Naive thymus-derived CD8-positive, alpha-beta T cell (primary cell): ENCODE measurements at regions of chr12 and their contacts with region 1.

Region 1: GRCh38 chr12:112978163-112979040 is at the start of gene OAS2:
- DNase-seq: peak; percentile 42 to 88 (median 75)
- ATAC-seq: peak; percentile 96
- H3K4me3 Mint-ChIP-seq: peak within 1 kb of the TSS; percentile 84 to 100 (median 99)
- H3K27ac Mint-ChIP-seq: peak within 1 kb of the TSS; percentile 98 to 100 (median 99)
- H3K4me1 Mint-ChIP-seq: peaks cover 31 to 64% (median 53%) of the 10 kb centered on the region in 4 donors
- H3K27me3 Mint-ChIP-seq: no peaks in the 10 kb centered on the region
- polyA plus RNA-seq, gene OAS2: 25.6 to 47.9 (median 25.8) TPM

Region 2: DNA sequence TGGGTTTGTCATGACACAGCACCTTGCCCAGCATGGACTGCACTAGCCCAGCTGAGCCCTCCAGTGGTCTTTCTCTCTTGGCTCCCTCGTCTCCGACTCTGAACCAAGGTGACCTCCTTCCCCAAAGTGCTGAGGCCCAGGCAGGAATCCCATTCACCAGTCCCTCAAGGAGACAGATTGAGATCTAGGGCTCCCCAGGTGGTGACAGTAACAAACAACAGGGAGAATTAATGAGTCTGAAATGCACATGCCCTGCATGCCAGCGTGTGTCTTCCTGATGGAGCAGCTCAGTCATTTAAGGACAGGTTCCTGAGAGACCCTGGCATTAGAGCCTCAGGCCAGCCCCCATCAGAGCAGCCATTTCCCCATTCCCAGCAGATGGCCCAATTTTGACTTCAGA is 123.0 kb before region 1 on chr12:
- POLR2A ChIA-PET with region 1: no interaction called
- DNase-seq: no peak
- ATAC-seq: no peak
- H3K4me3 Mint-ChIP-seq: no peak overlapping the region
- H3K27ac Mint-ChIP-seq: no peak overlapping the region
- H3K4me1 Mint-ChIP-seq: no peaks in the 10 kb centered on the region
- H3K27me3 Mint-ChIP-seq: peaks cover 14 to 78% (median 40%) of the 10 kb centered on the region in 5 donors

Region 3: GRCh38 chr12:112906712-112907414 is 71.5 kb before region 1 on chr12 and contains the start of gene OAS1:
- POLR2A ChIA-PET with region 1: interaction called, 26 read pairs
- DNase-seq: peak in 6 of 10 donors; percentile 11 to 38 (median 28)
- ATAC-seq: peak; percentile 83 to 91
- H3K4me3 Mint-ChIP-seq: peak within 1 kb of the TSS; percentile 82 to 99 (median 94)
- H3K27ac Mint-ChIP-seq: peak within 1 kb of the TSS; percentile 91 to 99 (median 95)
- H3K4me1 Mint-ChIP-seq: peaks cover 33 to 90% (median 71%) of the 10 kb centered on the region in 4 donors
- H3K27me3 Mint-ChIP-seq: no peaks in the 10 kb centered on the region
- polyA plus RNA-seq, gene OAS1: 5.7 to 22.9 (median 9.0) TPM

Region 4: DNA sequence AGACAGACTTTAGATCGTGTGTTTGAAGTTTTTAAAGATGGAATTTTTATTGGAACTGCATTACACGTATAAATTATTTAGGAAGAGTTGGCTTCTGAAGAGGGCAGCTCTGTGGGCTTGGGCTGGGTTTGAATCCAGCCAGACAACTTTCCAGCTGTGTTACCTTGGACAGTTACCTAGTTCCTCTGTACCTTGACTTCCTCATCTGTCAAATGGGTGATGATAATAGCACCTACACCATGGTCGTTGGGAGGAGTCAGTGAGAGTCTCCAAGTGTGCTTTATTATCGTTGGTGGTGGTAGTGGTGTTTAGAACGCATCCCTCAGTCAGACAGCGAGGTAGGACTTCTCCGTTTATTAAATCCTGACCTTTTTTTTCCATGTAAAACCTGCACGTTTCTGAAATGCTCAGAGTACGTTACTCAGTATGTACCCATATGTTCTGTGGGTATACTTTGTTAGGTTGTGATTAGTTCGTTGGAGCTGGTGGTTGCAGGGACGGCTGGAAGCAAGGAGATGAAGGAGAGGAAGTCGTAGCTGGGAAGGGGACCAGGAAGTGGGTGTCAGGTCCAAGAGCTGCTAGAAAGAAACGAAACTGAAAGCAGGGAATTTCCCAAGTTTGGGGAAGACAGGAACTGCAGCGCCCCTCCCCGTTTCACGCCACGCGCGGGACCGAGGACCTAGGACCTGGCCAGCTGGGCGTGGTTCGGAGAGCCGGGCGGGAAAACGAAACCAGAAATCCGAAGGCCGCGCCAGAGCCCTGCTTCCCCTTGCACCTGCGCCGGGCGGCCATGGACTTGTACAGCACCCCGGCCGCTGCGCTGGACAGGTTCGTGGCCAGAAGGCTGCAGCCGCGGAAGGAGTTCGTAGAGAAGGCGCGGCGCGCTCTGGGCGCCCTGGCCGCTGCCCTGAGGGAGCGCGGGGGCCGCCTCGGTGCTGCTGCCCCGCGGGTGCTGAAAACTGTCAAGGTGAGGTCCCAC is 40.4 kb before region 1 on chr12 and contains the start of gene OAS3:
- POLR2A ChIA-PET with region 1: interaction called, 22 read pairs
- DNase-seq: peak; percentile 31 to 79 (median 54)
- ATAC-seq: peak; percentile 68 to 81
- H3K4me3 Mint-ChIP-seq: peak within 1 kb of the TSS; percentile 84 to 96 (median 92)
- H3K27ac Mint-ChIP-seq: peak within 1 kb of the TSS; percentile 84 to 99 (median 94)
- H3K4me1 Mint-ChIP-seq: peaks cover 12 to 38% (median 34%) of the 10 kb centered on the region in 4 donors
- H3K27me3 Mint-ChIP-seq: no peaks in the 10 kb centered on the region
- polyA plus RNA-seq, gene OAS3: 9.1 to 21.3 (median 16.8) TPM

Region 5: DNA sequence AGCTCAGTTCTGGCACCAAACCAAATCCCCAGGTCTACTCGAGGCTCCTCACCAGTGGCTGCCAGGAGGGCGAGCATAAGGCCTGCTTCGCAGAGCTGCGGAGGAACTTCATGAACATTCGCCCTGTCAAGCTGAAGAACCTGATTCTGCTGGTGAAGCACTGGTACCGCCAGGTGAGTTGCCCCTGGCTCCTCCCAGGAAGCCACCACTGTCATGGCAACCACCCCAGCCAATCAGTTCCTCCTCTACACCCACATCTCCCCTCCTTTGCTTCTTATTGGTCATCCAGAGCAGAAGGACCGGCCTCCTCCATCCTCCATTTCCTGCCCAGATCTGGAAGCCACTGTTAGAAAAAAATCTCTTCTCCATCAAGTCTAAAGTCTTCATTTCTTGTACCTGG is 17.3 kb before region 1 on chr12:
- POLR2A ChIA-PET with region 1: interaction called, 13 read pairs
- DNase-seq: no peak
- ATAC-seq: no peak
- H3K4me3 Mint-ChIP-seq: no peak overlapping the region
- H3K27ac Mint-ChIP-seq: peak overlapping the region in 2 of 10 donors; percentile 8 to 84
- H3K4me1 Mint-ChIP-seq: peaks cover 7 to 17% (median 9%) of the 10 kb centered on the region in 4 donors
- H3K27me3 Mint-ChIP-seq: no peaks in the 10 kb centered on the region

Region 6: GRCh38 chr12:112992541-112993398 is 14.4 kb after region 1 on chr12:
- POLR2A ChIA-PET with region 1: interaction called, 21 read pairs
- DNase-seq: peak in 8 of 10 donors; percentile 14 to 73 (median 38)
- ATAC-seq: peak in 1 of 2 donors; percentile 57
- H3K4me3 Mint-ChIP-seq: no peak overlapping the region
- H3K27ac Mint-ChIP-seq: peak overlapping the region in 4 of 10 donors; percentile 35 to 77 (median 69)
- H3K4me1 Mint-ChIP-seq: peaks cover 12 to 27% (median 19%) of the 10 kb centered on the region in 4 donors
- H3K27me3 Mint-ChIP-seq: no peaks in the 10 kb centered on the region

Region 7: GRCh38 chr12:113184900-113185773 is 206.7 kb after region 1 on chr12 and contains the starts of genes DDX54 and RITA1:
- POLR2A ChIA-PET with region 1: interaction called, 15 read pairs
- DNase-seq: peak; percentile 78 to 97 (median 87)
- ATAC-seq: peak; percentile 85 to 87
- H3K4me3 Mint-ChIP-seq: peak within 1 kb of the TSS; percentile 90 to 99 (median 95)
- H3K27ac Mint-ChIP-seq: peak within 1 kb of the TSS; percentile 92 to 98 (median 96)
- H3K4me1 Mint-ChIP-seq: peaks cover 19 to 52% (median 39%) of the 10 kb centered on the region in 4 donors
- H3K27me3 Mint-ChIP-seq: no peaks in the 10 kb centered on the region
- polyA plus RNA-seq, gene DDX54: 17.9 to 38.2 (median 24.3) TPM
- polyA plus RNA-seq, gene RITA1: 22.9 to 26.2 (median 24.6) TPM